SK-N-SH (cell line): ENCODE measurements at regions of chr17 and their contacts with region 1.

Region 1: DNA sequence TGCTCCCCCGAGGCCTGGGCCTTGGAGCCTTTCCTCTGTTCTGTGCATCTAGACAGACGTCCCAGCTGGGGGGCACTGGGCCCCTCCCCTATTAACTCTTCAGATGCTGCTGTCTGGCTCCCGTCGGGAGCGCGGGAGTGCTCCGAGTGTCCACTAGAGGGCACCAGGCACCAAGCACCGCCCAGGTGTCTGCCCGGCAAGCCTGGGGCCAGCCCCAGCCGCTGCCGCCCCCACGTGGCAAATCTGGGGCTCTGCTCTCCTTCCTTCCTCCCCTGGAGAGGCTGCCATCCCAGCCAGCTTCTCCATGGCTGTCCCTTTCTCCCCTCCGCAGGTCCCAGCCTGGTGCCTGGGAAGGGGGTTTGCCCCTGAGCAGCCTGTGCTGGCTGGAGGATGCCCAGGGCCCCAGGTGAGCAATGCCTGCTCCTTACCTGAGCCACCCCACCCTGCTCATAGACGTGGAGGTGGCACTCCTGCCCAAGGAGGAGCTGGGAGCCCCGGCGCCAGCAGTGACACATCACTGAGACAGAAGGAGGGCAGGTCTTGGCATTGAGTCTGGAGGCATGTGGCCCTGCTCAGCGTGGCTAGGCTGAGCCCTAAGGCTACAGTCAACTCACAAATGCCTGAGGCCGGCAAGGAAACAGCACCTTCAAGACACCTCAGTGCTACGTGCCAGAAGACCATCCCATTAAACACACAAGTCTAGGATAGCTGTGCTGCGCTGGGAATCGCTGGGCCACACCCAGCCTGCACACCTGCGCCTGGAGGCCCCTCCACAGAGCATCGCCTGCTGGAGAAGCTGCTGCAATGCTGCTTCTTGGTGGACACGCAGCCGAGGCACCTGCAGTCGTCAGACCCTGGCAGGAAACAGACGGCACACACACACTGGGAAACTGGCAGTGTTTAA is 19.7 kb downstream of the TMEM235 start:
- DNase-seq: peak; percentile 99
- H3K4me3 ChIP-seq: peak overlapping the region; percentile 10 to 40; a peak in 2 of 4 replicates
- H3K27ac ChIP-seq: peak overlapping the region in 1 of 2 experiments; percentile 82; a peak in 2 of 4 replicates
- H3K4me1 ChIP-seq: peaks cover 0 to 63% of the 10 kb centered on the region in 2 experiments; a peak in 1 of 4 replicates
- H3K27me3 ChIP-seq: no peaks in the 10 kb centered on the region
- CTCF ChIP-seq: peak; percentile 100
- EP300 ChIP-seq: no peak
- RAD21 ChIP-seq: peak; percentile 99

Region 2: DNA sequence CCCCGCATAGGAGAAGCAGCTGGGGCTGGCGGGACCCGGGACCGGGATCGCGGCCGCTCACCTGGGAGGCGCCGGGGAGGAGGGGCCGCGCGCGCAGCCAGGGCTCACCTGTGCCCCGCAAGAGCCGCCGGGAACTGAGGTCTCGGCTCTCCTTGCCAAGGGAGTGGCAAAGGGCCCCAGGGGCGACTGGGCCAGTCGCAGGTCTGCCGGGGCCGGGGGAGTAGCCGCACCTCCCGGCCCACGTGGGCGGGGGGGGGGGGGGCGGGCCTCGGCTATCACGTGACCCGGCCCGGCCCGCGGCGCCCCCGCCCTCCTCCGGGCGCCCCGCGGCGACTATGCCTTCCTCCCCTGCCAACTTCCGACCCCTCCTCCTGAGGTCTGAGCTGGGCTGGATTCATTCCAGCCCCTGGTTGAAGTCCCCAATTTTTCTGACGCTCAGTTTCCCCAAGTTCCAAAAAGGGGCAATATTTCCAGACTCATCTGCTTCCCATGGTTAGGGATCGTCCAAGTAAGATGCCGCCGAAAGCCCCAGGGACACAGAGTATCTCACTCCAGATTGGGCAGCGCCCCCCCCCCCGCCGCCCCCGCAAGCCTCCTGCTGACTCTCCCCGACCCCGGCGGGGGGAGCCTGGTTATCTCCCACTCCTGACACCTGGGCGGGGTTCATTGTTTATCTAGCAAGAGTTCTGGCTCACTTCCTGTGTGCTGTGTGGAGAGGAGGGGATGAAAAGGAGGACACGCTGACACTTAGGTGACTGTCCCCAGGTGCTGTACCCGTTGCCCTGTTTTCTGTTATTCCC is 122.4 kb before region 1 on chr17 and contains the start of gene TMC6:
- CTCF ChIA-PET with region 1: interaction called, 27 read pairs
- POLR2A ChIA-PET with region 1: no interaction called
- DNase-seq: peak; percentile 93
- H3K4me3 ChIP-seq: peak within 1 kb of the TSS; percentile 74 to 75
- H3K27ac ChIP-seq: no peak within 1 kb of the TSS; a peak in 1 of 4 replicates
- H3K4me1 ChIP-seq: peaks cover 4 to 39% of the 10 kb centered on the region in 2 experiments; a peak in 1 of 4 replicates
- H3K27me3 ChIP-seq: peaks cover 3% of the 10 kb centered on the region
- CTCF ChIP-seq: no peak
- EP300 ChIP-seq: no peak
- RAD21 ChIP-seq: no peak
- polyA plus RNA-seq, gene TMC6: 3.8 and 5.5 TPM in 2 replicates

Region 3: DNA sequence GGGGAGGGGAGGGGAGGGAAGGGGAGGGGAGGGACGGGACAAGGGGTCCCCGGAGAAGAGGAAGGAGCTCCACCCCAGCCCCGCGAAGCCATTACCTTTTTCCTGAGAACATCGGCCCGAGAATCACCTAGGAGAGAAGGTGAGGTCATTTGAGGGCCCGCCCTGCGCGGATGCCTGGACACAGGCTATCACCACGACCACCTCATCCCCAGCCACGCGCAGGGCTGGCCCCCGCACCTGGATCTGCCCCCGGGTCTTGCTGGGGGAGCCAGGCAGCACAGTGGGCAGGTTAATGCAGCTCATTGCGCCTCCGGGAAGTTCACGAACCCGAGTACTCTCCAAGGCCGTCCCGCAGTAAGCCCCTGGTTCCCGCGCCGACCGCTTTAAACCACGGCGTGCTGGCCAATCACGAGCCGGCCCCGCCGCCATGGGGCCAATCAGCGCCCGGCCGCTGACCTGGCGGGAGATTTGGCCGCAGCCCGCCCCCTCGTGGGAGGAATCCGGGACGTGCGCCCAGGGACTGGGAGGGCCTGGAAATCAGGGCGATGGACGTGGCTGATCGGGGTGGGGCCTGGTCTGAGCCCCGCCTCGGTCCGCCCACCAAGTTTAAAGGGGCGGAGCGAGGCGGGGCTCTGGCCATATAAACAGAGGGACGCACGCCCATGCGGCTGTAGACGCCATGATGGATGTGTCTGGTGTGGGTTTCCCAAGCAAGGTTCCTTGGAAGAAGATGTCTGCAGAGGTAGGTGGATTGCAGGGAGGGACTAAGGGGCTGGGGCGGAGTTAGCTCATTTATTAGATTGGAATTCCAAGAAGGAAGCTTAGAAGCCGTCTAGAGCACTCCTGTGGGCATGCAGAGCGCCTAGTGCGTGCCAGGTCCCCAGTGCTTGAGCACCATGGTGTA is 64.2 kb before region 1 on chr17 and contains the starts of genes AFMID and TK1:
- CTCF ChIA-PET with region 1: interaction called, 59 read pairs
- POLR2A ChIA-PET with region 1: interaction called, 4 read pairs
- DNase-seq: peak; percentile 100
- H3K4me3 ChIP-seq: peak within 1 kb of the TSS; percentile 54 to 78
- H3K27ac ChIP-seq: peak within 1 kb of the TSS; percentile 26 to 48; a peak in 2 of 4 replicates
- H3K4me1 ChIP-seq: peaks cover 7% of the 10 kb centered on the region in 2 experiments; a peak in 2 of 4 replicates
- H3K27me3 ChIP-seq: no peaks in the 10 kb centered on the region
- CTCF ChIP-seq: peak; percentile 85
- EP300 ChIP-seq: no peak
- RAD21 ChIP-seq: peak; percentile 35
- polyA plus RNA-seq, gene AFMID: 44.4 and 59.0 TPM in 2 replicates
- polyA plus RNA-seq, gene TK1: 70.7 and 112 TPM in 2 replicates

Region 4: GRCh38 chr17:78272181-78272913 is 21.2 kb after region 1 on chr17:
- CTCF ChIA-PET with region 1: interaction called, 60 read pairs
- POLR2A ChIA-PET with region 1: interaction called, 4 read pairs
- DNase-seq: peak; percentile 15
- H3K4me3 ChIP-seq: no peak overlapping the region
- H3K27ac ChIP-seq: no peak overlapping the region; a peak in 1 of 4 replicates
- H3K4me1 ChIP-seq: peaks cover 0 to 54% of the 10 kb centered on the region in 2 experiments; a peak in 2 of 4 replicates
- H3K27me3 ChIP-seq: peaks cover 16% of the 10 kb centered on the region
- CTCF ChIP-seq: no peak
- EP300 ChIP-seq: no peak
- RAD21 ChIP-seq: no peak

Region 5: DNA sequence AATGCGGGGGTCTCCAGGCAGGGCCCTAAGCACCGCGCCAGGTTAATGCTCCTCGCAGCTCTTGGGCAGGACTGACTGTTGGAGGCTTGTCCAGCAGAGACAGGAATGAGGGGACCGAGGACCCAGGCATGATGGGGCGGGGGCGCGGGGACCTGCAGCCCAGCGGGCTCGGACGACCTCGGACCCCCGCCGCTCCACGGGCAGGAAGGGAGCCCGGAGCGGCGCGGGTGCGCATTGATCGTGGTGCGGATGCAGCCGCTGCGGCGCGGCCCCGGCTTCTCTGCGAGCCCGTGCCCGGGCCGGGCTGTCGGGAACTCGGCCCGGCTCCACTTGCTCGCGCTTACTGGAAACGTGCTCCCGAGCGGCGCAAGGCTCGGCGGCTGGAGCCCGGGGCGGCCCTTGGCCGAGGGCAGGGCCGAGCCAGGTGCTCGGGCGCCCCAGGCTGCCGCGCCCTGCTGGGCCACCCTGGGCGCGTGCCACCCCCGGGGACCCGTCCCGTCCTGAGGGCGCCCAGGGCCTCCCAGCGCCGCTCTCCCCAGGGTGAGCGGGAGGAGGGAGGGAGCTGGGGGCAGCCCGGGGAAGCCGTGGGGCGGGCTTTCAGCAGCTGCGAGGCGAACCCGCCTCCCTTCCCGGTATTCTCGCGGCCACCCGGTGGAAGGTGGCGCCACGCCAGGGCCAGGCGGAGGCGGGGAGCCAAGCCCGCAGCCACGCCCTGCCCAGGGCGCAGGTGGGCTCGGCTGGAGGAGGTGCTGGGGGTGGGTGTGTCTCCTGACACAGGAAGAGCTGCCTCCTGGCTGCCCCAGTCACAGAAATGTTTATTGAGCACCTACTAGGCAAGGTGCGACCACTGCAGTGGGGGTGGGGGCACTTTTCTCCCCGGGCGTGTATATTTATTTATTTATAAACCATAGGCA is 62.8 kb after region 1 on chr17:
- CTCF ChIA-PET with region 1: interaction called, 18 read pairs
- POLR2A ChIA-PET with region 1: no interaction called
- DNase-seq: peak; percentile 95
- H3K4me3 ChIP-seq: peak overlapping the region; percentile 48 to 50
- H3K27ac ChIP-seq: peak overlapping the region; percentile 18 to 99; a peak in 3 of 4 replicates
- H3K4me1 ChIP-seq: peaks cover 21 to 32% of the 10 kb centered on the region in 2 experiments; a peak in 3 of 4 replicates
- H3K27me3 ChIP-seq: no peaks in the 10 kb centered on the region
- CTCF ChIP-seq: 0 out of 2 replicates have a peak, but pooled peaks have one; percentile 8
- EP300 ChIP-seq: no peak
- RAD21 ChIP-seq: no peak

Region 6: DNA sequence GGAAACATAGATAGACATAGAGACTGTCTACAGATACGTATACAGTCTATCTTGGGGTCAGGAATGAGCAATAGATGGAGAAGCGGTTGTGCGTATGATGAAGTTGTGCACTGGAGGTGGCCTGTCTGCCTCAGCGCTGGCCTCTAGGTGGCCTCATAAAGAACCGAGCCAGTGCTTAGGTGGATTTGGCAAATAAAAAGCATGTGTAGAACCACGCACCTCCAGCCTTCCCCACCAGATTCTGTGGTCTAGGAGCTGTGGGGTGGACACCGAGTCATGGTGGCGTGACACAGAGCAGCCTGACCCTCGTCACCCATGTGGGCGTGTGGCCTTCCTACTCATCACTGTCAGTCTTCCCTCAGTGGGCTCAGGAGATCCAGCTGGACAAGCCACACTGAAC is 161.3 kb after region 1 on chr17:
- CTCF ChIA-PET with region 1: interaction called, 27 read pairs
- POLR2A ChIA-PET with region 1: no interaction called
- DNase-seq: peak; percentile 58
- H3K4me3 ChIP-seq: no peak overlapping the region
- H3K27ac ChIP-seq: no peak overlapping the region; a peak in 1 of 4 replicates
- H3K4me1 ChIP-seq: peaks cover 0 to 22% of the 10 kb centered on the region in 2 experiments; a peak in 1 of 4 replicates
- H3K27me3 ChIP-seq: no peaks in the 10 kb centered on the region
- CTCF ChIP-seq: peak; percentile 59
- EP300 ChIP-seq: no peak
- RAD21 ChIP-seq: no peak